AG04449 (cell line): ENCODE measurements at regions of chr5 and their contacts with region 1.

Region 1: GRCh38 chr5:34486160-34486848 is 169.8 kb upstream of the RAI14 start:
- DNase-seq: peak; percentile 54
- H3K4me3 ChIP-seq: no peak overlapping the region
- CTCF ChIP-seq: peak; percentile 70

Region 2: DNA sequence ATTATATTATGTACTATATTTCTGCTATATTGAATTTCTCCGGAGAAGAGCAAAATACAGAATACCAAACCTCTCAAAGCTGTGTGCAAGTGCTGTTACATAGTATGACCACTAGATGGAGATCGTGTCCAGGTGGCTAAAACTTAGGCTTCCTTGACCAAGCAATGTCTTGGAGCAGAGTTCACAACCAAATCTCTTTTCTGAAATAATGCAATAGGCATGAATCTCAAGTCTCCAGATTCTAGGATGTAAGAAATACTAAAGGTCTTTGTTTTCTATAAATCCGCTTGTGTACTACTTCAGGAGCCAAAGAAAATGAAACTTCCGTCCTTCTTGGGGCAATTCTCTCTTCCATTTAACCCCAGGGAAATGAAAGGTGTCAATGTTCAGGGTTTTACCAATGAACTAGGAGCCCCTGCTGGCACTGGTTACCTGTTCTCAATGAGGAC is 11.7 kb before region 1 on chr5:
- CTCF ChIA-PET with region 1: interaction called, 54 read pairs
- POLR2A ChIA-PET with region 1: no interaction called
- DNase-seq: no peak
- H3K4me3 ChIP-seq: no peak overlapping the region
- CTCF ChIP-seq: peak; percentile 78

Region 3: DNA sequence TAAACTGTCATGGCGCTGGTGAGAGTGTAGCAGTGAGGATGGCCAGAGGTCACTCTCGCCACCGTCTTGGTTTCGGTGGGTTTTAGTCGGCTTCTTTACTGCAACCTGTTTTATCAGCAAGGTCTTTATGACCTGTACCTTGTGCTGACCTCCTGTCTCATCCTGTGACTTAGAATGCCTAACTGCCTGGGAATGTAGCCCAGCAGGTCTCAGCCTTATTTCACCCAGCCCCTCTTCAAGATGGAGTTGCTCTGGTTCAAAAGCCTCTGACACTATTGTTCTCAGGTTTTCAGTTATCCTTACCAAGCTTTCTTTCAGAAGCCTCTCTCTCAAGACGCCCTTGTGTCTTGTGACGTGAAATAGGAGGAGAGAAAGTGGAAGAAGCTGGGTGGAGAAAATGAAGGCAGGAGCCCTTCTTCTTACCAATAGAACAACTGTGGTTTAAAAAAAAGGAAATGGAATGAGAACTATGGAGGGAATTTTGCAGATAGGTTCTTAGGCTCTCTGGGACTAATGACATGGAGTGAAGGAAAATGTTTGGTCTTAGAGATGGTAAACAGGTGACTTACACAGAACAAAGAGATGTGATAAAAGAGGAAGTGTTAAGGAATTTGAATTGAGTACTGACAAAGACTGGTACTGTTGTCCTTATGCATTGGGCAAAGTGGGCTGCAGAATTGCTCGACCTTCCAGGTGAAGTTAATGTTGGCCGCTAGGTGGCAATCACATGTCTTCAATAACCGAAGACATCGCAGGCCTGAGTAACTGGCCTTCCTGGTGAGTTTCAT is 36.5 kb after region 1 on chr5:
- CTCF ChIA-PET with region 1: interaction called, 27 read pairs
- POLR2A ChIA-PET with region 1: interaction called, 3 read pairs
- DNase-seq: peak; percentile 68
- H3K4me3 ChIP-seq: no peak overlapping the region
- CTCF ChIP-seq: peak; percentile 65

Region 4: DNA sequence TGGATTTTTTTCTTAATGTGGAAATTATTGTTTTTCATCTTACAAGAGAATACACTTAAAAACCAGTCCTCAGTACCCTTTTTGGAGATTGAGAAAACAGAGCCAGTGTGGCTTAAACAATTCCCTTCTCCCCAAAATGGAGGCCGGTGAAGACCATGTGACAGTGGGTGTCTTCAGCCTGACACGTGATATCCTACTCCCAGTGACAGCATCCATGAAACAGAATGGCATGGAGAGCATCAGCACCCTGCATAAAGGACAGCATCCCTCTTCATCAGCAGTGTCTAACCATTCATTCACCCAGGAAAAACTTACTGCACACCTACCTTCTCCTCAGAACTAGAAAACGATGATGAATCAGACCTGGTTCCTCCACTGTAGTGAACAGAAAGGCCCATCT is 66.4 kb after region 1 on chr5:
- CTCF ChIA-PET with region 1: no interaction called
- POLR2A ChIA-PET with region 1: no interaction called
- DNase-seq: no peak
- H3K4me3 ChIP-seq: no peak overlapping the region
- CTCF ChIP-seq: no peak

Region 5: DNA sequence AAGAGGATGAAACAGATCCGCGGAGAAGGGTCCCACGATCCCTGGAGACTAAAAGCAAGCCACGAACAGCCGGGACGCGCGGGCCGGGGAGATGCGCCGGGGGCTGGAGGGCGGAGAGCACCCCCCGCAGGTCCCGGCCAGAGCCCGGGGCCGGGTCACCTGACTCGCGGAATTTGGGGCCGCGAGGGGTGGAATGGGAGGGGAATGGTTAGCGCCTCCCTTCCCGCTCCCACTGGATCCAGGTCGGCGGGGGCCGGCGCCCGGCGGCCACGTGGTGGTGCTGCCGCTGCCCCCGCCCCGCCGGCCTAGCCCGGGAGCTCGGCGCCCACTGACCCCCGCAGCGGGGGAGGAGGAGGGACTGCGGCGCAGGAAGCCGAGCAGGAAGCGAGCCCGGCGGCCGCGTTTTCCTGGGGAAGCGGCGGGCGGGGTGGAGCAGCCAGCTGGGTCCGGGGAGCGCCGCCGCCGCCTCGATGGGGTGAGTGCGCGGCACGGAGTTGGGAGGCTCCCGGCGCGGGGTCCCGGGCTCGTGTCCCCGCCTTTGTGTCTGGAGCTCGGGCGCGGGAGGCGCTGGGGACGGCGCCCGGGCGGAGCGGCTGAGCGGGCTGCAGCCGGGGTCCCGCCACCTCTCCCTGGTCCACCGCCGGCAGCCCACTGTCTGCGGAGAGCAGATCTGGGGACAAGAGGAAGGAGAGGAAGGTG is 169.8 kb after region 1 on chr5 and contains the start of gene RAI14:
- CTCF ChIA-PET with region 1: interaction called, 21 read pairs
- POLR2A ChIA-PET with region 1: interaction called, 5 read pairs
- DNase-seq: no peak
- H3K4me3 ChIP-seq: peak within 1 kb of the TSS; percentile 85
- CTCF ChIP-seq: no peak

Region 6: GRCh38 chr5:34686762-34687268 is 200.5 kb after region 1 on chr5:
- CTCF ChIA-PET with region 1: interaction called, 26 read pairs
- POLR2A ChIA-PET with region 1: no interaction called
- DNase-seq: peak; percentile 92
- H3K4me3 ChIP-seq: no peak overlapping the region
- CTCF ChIP-seq: peak; percentile 1

Region 7: DNA sequence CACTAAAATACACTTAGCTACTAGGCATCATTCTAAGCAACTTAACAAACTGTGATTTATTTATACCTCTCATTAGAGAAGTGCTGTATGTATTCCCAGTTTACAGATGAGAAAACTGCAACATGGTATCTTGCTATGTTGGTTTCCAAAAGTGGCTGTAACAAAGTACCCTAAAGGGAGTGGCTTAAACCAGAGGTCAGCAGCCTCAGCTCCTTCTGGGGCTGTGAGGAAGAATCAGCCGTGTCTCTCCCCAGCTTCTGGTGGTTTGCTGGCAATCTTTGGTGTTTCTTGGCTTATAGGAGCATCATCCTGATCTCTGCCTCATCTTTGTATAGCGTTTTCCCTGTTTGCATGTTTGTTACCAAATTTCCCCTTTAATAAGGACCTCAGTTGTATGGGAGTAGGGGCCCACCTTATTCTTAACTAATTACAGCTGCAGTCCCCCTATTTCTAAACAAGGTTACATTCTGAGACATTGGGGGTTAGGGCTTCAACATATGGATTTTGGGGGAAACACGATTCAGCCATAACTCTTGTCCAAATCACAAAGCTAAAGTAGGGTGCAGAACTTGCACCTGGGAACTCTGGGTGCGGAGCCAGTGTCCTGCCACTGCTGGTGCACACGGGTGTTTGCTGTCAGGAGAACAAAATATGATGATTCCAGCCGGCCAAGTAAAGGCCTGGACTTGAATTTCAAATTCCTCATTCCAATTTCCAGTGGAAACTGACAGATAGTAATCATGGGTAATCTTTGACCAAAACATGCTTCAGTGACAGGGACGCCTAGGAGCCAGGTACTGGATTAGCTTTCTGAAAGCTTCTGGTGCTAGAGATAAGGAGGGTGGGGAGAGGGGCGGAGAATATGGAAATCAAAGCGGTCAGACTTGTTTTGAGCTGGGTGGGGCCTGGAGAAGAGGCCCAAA is 213.1 kb after region 1 on chr5:
- CTCF ChIA-PET with region 1: no interaction called
- POLR2A ChIA-PET with region 1: no interaction called
- DNase-seq: no peak
- H3K4me3 ChIP-seq: no peak overlapping the region
- CTCF ChIP-seq: no peak

Region 8: GRCh38 chr5:34898258-34898895 is 412.1 kb after region 1 on chr5:
- CTCF ChIA-PET with region 1: interaction called, 687 read pairs
- POLR2A ChIA-PET with region 1: no interaction called
- DNase-seq: peak; percentile 38
- H3K4me3 ChIP-seq: no peak overlapping the region
- CTCF ChIP-seq: peak; percentile 76

Region 9: DNA sequence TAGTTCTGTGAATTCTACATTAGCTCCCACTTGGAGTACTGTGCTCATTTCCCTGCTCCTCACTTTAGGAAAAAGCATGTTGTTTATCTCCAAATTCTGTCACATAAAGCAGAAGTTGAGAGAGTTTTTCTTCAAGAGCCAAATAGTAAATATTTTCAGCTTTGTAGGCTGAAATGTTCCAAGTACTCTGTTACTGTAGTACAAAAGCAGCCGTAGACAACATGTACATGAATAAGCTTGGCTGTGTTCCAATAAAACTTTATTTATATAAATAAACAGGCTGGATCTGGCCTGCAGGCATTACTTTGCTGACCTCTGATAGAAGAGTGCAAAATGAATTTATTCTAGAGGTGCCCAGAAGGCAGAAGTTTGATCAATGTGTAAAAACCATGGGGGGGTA is 634.4 kb after region 1 on chr5:
- CTCF ChIA-PET with region 1: no interaction called
- POLR2A ChIA-PET with region 1: no interaction called
- DNase-seq: no peak
- H3K4me3 ChIP-seq: no peak overlapping the region
- CTCF ChIP-seq: no peak